Caco-2 (cell line): ENCODE measurements at regions of chr1 and their contacts with region 1.

Region 1: DNA sequence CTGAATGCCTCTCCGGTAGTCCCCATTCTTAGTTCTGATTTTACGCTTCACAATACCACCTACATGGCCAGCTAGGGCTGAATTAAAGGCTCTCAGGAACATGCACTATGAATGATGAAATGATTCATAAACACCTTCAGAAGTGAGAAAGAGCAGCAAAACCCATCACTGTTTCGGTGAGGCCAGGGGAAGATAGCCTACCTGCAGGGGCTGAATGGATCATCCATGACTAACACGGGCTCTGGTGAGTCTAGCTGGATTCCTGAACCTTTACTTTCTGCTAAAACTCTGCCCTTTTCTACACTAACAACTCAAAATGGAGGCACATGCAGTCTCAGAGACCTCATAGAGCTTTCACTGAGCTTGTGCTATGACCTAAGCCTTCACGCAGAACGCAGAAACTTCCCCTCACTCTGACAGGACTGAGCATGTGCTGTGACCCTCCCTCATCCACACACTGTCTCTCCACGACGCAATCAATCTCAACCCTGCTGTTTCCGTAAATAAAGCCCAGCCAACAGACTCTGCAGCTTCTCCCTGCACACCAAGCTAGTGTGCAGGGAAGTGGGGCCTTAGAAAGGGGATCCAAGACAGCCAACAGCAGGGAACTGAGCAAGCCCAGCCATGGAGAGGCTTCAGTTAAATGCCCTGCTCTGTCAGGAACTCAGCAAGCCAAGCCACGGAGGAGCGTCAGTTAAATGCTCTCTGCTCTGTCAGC is 207.8 kb downstream of the SLC45A1 start:
- DNase-seq: peak; percentile 81 to 90
- H3K4me3 ChIP-seq: peak overlapping the region; percentile 32
- H3K4me3 Mint-ChIP-seq: no peak overlapping the region
- H3K27ac Mint-ChIP-seq: no peak overlapping the region
- H3K4me1 ChIP-seq: peaks cover 15% of the 10 kb centered on the region
- H3K4me1 Mint-ChIP-seq: peaks cover 18% of the 10 kb centered on the region
- H3K27me3 ChIP-seq: no peaks in the 10 kb centered on the region
- H3K27me3 Mint-ChIP-seq: no peaks in the 10 kb centered on the region
- CTCF ChIP-seq: no peak

Region 2: GRCh38 chr1:8374812-8375211 is 150.9 kb before region 1 on chr1:
- CTCF ChIA-PET with region 1: no interaction called
- POLR2A ChIA-PET with region 1: no interaction called
- intact Hi-C with region 1: no loop called
- DNase-seq: peak in 1 of 2 experiments; percentile 41
- H3K4me3 ChIP-seq: no peak overlapping the region
- H3K4me3 Mint-ChIP-seq: no peak overlapping the region
- H3K27ac Mint-ChIP-seq: no peak overlapping the region
- H3K4me1 ChIP-seq: 0 out of 2 replicates have a peak, but pooled peaks cover 5% of the 10 kb centered on the region
- H3K4me1 Mint-ChIP-seq: peaks cover 9% of the 10 kb centered on the region
- H3K27me3 ChIP-seq: no peaks in the 10 kb centered on the region
- H3K27me3 Mint-ChIP-seq: no peaks in the 10 kb centered on the region
- CTCF ChIP-seq: peak in 1 of 2 experiments; percentile 59

Region 3: DNA sequence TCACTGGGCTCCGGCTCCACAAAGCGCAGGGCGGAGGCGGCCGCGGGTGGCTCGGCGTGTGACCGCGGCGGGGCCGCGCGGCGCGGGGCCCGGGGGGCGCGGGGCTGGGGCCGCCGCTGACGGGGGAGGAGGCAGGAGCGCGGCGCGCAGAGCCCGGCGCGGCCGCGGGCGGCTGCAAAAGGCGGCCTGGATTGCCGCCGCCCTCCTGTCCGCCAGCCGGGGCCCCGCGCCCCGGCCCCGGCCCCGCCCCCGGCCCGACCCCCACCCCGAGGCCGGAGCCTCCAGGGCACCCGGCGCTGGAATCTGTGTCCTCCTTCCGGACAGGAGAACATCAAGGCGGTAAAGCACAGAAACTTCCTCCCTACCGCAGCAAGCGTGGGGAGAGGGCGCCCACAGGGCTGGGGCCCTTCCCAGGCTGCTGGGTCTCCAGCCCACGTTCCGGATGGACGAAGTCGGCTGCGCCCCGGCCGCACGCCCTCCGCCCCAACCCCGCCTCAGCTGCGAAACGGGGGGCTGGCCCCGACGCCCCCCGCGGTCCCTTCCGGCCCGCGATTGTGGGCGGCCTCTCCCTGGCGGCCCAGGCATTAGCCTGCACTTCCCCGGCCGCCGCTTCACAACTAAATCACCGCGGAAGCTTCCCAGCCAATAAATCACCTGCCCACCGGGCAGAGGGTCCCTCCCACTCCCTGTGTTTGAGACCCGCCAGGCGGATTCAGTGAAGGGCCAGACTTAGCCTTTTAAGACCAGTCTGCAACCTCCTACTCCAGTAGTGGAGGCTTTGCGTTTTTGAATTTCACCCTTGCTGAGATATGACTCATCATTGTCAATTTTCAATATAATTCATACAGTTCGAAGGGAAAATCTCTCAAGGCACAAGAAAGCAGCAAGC is 101.8 kb before region 1 on chr1:
- CTCF ChIA-PET with region 1: interaction called, 3 read pairs
- POLR2A ChIA-PET with region 1: no interaction called
- intact Hi-C with region 1: loop called (anchors 5 kb)
- DNase-seq: peak; percentile 75 to 79
- H3K4me3 ChIP-seq: peak overlapping the region; percentile 80
- H3K4me3 Mint-ChIP-seq: no peak overlapping the region
- H3K27ac Mint-ChIP-seq: peak overlapping the region; percentile 74
- H3K4me1 ChIP-seq: peaks cover 50% of the 10 kb centered on the region
- H3K4me1 Mint-ChIP-seq: peaks cover 30% of the 10 kb centered on the region
- H3K27me3 ChIP-seq: no peaks in the 10 kb centered on the region
- H3K27me3 Mint-ChIP-seq: no peaks in the 10 kb centered on the region
- CTCF ChIP-seq: peak in 1 of 2 experiments; percentile 4

Region 4: GRCh38 chr1:8551613-8552489 is 26.1 kb after region 1 on chr1:
- CTCF ChIA-PET with region 1: interaction called, 6 read pairs
- POLR2A ChIA-PET with region 1: interaction called, 5 read pairs
- intact Hi-C with region 1: loop called (anchors 2 kb)
- DNase-seq: peak in 1 of 2 experiments; percentile 43
- H3K4me3 ChIP-seq: no peak overlapping the region
- H3K4me3 Mint-ChIP-seq: peak overlapping the region; percentile 39
- H3K27ac Mint-ChIP-seq: peak overlapping the region; percentile 57
- H3K4me1 ChIP-seq: peaks cover 25% of the 10 kb centered on the region
- H3K4me1 Mint-ChIP-seq: peaks cover 33% of the 10 kb centered on the region
- H3K27me3 ChIP-seq: no peaks in the 10 kb centered on the region
- H3K27me3 Mint-ChIP-seq: no peaks in the 10 kb centered on the region
- CTCF ChIP-seq: no peak